Mammary epithelial cell (primary cell): ENCODE measurements at regions of chr11 and their contacts with region 1.

Region 1: GRCh38 chr11:125874556-125875124 is 12.8 kb upstream of the HYLS1 start:
- DNase-seq: peak; percentile 44
- H3K4me3 ChIP-seq: no peak overlapping the region
- H3K27ac ChIP-seq: no peak overlapping the region
- H3K4me1 ChIP-seq: no peaks in the 10 kb centered on the region
- H3K27me3 ChIP-seq: no peaks in the 10 kb centered on the region
- CTCF ChIP-seq: peak; percentile 83 to 85

Region 2: GRCh38 chr11:124961972-124962609 is 912.5 kb before region 1 on chr11:
- CTCF ChIA-PET with region 1: no interaction called
- dilution Hi-C with region 1: no loop called
- in situ Hi-C with region 1: no loop called
- intact Hi-C with region 1: loop called (anchors 1 kb)
- DNase-seq: peak; percentile 67
- H3K4me3 ChIP-seq: no peak overlapping the region
- H3K27ac ChIP-seq: no peak overlapping the region
- H3K4me1 ChIP-seq: no peaks in the 10 kb centered on the region
- H3K27me3 ChIP-seq: no peaks in the 10 kb centered on the region
- CTCF ChIP-seq: peak; percentile 73 to 76

Region 3: GRCh38 chr11:125724125-125724524 is 150.5 kb before region 1 on chr11:
- CTCF ChIA-PET with region 1: no interaction called
- dilution Hi-C with region 1: no loop called
- in situ Hi-C with region 1: no loop called
- intact Hi-C with region 1: loop called (anchors 1 kb)
- DNase-seq: peak; percentile 16
- H3K4me3 ChIP-seq: no peak overlapping the region
- H3K27ac ChIP-seq: no peak overlapping the region
- H3K4me1 ChIP-seq: no peaks in the 10 kb centered on the region
- H3K27me3 ChIP-seq: no peaks in the 10 kb centered on the region
- CTCF ChIP-seq: peak; percentile 17 to 52